T-cell (primary cell): ENCODE measurements at regions of chr22 and their contacts with region 1.

Region 1: DNA sequence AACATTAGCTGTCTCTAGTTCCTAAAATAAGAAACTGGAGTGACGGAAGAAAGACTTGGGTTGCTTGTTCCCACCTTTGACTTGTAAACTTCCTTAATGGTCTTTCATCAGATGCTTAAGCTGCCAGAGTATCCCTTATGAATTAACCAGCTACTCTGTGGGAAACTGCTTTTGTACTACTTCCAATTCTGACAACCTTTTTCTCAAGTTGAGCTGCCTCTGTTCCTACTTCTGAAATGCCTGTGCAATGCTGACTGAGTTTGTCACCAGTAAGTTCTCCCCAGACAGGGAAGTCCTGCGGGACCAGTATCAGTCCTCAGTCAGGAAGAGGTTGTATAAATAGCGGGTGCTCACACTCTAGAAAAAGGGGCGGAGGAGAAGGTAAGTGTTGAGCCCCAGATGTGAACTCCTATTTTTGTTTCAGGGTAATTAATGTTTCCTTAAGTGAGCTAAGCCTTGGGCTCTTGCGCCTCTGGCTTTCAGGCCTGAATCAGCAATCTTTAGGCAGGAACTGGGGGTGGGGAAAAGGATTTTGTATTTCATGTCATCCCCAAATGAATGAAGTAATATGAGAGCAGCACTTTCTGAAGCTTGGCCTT is 67.2 kb downstream of the CECR2 start:
- DNase-seq: no peak
- ATAC-seq: no peak
- H3K4me3 ChIP-seq: no peak overlapping the region
- H3K4me3 Mint-ChIP-seq: no peak overlapping the region
- H3K27ac ChIP-seq: no peak overlapping the region
- H3K27ac Mint-ChIP-seq: no peak overlapping the region
- H3K4me1 ChIP-seq: no peaks in the 10 kb centered on the region
- H3K4me1 Mint-ChIP-seq: no peaks in the 10 kb centered on the region
- H3K27me3 ChIP-seq: peaks cover 0 to 6% of the 10 kb centered on the region in 2 experiments
- H3K27me3 Mint-ChIP-seq: peaks cover 6% of the 10 kb centered on the region in 2 donors

Region 2: GRCh38 chr22:17501679-17502285 is 65.3 kb after region 1 on chr22:
- CTCF ChIA-PET with region 1: interaction called in 1 of 2 experiments, 14 read pairs
- POLR2A ChIA-PET with region 1: no interaction called
- DNase-seq: peak in 19 of 35 experiments; percentile 2 to 80 (median 17)
- ATAC-seq: peak; percentile 63 to 81 (median 70)
- H3K4me3 ChIP-seq: no peak overlapping the region
- H3K4me3 Mint-ChIP-seq: no peak overlapping the region
- H3K27ac ChIP-seq: no peak overlapping the region
- H3K27ac Mint-ChIP-seq: no peak overlapping the region
- H3K4me1 ChIP-seq: no peaks in the 10 kb centered on the region
- H3K4me1 Mint-ChIP-seq: no peaks in the 10 kb centered on the region
- H3K27me3 ChIP-seq: peaks cover 0 to 11% of the 10 kb centered on the region in 2 experiments
- H3K27me3 Mint-ChIP-seq: peaks cover 0 to 2% of the 10 kb centered on the region in 2 donors